ENCODE measurements at regions of chrX and their contacts with region 1.

Region 1: DNA sequence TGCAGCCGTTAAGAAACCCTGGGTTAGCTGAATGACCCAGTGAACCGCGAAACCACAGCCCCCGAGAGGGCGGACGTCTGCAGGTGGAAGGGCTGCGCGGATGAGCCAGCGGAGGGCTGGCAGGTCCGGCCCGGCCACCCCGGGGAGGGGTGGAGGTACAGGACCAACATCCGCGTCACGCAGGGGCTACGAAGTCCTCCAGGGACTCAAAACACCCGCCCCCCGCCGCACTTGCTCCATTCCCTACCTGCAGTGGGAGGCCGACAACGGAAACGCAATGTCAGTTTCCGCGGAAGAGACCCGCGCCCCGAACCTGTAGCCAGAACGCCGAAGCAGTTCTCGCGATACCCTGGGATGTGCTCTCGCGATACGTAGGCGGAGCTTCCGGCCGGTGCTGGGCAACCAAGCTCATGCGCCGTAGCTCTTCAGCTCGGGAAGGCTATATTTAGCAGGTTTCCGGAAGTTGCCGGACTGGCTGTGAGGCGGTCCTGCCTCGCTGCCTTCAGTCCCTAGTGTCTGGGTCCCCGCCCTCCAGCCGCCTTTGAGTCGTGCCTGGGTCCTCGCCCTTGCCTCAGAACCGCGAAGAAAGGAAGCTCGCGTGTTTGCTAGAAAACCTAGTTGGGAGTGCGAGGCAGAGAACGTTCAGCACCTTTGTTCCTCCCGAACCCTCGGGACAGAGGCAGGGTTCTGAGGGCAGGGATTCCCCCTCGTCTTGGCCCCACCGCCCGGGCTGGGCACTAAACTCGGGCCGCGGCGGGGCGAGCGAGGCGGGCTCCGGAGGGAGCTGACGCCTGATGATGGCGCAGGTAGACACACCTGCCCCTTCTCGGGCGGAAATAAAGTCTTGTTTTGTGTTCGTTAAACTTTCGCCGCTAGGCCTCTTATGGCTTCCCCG is at the starts of genes OFD1 and TRAPPC2:
- DNase-seq: peak; percentile 93
- ATAC-seq: peak; percentile 100
- total RNA-seq, gene OFD1: 7.1 TPM
- total RNA-seq, gene TRAPPC2: 7.1 TPM

Region 2: DNA sequence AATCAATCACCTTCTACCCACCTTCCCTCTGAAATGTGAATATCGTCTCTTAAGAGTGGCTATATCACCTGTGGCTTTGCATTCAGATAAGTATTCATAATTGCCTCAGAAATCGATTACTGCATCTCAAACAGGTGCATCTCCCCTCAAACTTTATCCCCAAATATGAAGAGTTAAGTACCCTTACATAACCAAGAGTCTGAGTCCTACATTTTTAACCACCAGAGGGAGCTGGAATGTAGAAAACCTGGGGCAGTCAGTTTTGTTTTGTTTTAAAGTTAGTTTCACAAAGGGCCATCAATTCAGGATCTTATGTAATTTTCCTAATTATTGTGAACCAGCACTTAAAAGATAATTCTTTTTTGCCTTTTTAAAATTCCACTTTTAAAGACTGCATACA is 75.9 kb before region 1 on chrX:
- intact Hi-C with region 1: loop called (anchors 5 kb)
- DNase-seq: no peak
- ATAC-seq: peak; percentile 34

Region 3: DNA sequence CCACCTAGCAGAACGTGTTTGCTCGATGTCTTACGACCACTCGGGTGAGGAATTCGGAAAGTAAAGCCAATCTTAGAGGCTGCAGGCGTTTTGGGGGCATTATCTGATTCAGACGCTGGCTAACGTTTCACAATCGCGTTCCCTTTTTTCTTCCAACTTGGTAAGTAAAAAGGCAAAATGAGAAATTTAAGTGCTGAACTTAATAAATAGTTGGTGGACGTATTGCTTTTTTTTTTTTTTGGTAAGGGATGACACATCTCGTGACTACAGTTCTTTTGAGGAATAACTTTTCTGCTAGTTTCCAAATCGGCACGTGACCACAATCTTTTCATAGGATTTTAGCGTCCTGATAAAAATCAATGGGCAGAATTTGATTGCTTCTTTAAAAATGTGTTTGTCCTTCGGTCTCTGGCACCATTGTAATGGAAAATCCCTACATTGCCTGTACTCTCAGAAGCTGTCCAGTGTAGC is 44.7 kb before region 1 on chrX:
- intact Hi-C with region 1: loop called (anchors 5 kb)
- DNase-seq: no peak
- ATAC-seq: no peak

Region 4: GRCh38 chrX:13923845-13924244 is 189.3 kb after region 1 on chrX:
- intact Hi-C with region 1: no loop called
- DNase-seq: no peak
- ATAC-seq: no peak

Measured in Right ventricle myocardium inferior (tissue), 1 donor.